CD4-positive, alpha-beta T cell (primary cell): ENCODE measurements at regions of chrX and their contacts with region 1.

Region 1: DNA sequence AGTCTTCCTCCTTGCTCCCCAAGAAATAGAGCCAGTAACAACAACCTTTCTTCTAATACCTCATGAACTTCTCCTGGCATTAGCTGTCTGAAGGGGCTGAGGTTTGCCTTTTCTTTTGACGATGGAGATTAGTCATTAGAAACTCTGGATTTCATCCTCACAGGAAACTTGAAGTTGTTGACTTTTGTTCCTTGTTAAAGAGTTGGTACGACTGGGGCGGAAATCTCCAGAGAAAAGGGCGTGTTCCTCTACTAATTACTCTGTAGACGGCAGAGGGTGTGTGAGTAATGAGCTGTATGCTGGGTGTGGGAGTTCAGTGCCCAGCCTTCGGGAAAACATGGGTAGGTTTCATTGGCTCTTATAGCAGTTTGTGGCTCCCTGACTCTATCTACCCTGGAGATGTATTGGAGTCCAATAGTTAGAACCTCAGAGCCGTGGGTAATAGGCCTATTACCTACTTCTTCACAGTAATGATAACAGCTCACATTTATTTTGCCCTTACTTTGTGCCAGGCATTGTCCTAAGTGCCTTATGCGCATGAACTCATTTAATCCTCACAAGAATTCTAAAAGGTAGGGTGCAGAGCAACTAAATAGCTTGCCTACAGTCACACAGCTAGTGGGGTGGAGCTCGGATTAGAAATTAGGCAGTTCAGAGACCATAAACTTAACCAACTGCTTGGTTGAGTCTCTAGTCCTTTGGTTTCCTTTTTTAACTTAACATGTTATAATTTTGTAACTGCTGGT is 23.4 kb downstream of the TMEM164 start:
- DNase-seq: peak in 1 of 14 experiments; percentile 15
- ATAC-seq: no peak
- H3K4me3 ChIP-seq: no peak overlapping the region
- H3K4me3 Mint-ChIP-seq: no peak overlapping the region
- H3K27ac ChIP-seq: no peak overlapping the region
- H3K27ac Mint-ChIP-seq: no peak overlapping the region
- H3K4me1 ChIP-seq: no peaks in the 10 kb centered on the region
- H3K4me1 Mint-ChIP-seq: peaks cover 17% of the 10 kb centered on the region
- H3K27me3 ChIP-seq: no peaks in the 10 kb centered on the region
- H3K27me3 Mint-ChIP-seq: no peaks in the 10 kb centered on the region
- CTCF ChIP-seq: no peak

Region 2: DNA sequence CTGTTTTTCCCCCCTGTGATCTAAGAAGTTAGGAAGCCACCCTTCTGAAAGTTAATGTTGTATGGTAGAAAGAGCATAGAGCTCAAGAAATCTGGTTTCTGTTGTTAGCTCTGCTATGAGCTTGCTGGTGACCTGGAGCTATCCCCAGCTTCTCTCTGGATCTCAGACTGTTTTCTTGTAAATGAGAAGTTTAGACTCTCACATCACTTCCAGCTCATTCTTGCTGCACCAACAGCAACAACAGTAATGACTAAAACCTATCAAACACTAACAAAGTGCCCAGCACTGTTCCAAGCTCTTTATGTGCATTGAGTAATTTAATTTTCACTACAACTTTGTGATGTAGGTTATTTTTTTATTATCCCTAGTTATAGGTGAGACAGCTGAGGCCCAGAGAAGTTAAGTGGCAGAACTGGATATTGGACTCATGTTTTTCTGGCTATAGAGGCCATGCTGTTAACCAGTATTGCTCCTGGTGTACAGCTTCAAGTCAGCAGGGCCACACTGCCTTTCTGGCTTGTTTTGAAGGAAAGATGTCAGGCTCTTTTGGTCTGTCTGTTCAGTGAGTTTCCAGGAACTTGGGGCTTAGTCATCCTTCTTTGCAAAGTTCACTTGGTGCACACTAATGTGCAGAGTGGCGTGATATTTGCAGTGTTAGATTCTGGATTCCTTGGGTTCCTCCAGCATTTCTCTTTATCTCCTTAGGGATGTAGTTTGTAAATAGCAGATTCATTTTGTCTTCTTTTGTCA is 51.2 kb before region 1 on chrX:
- CTCF ChIA-PET with region 1: no interaction called
- POLR2A ChIA-PET with region 1: no interaction called
- intact Hi-C with region 1: loop called in 1 of 2 experiments (anchors 5 kb)
- DNase-seq: no peak
- ATAC-seq: no peak
- H3K4me3 ChIP-seq: no peak overlapping the region
- H3K4me3 Mint-ChIP-seq: no peak overlapping the region
- H3K27ac ChIP-seq: no peak overlapping the region
- H3K27ac Mint-ChIP-seq: no peak overlapping the region
- H3K4me1 ChIP-seq: no peaks in the 10 kb centered on the region
- H3K4me1 Mint-ChIP-seq: no peaks in the 10 kb centered on the region
- H3K27me3 ChIP-seq: peaks cover 0 to 3% of the 10 kb centered on the region in 2 experiments
- H3K27me3 Mint-ChIP-seq: peaks cover 7% of the 10 kb centered on the region
- CTCF ChIP-seq: no peak